ENCODE measurements at regions of chrX and their contacts with region 1.

Region 1: GRCh38 chrX:48917139-48918001 is 1.5 kb downstream of the PIM2 start:
- DNase-seq: peak; percentile 75 to 89
- ATAC-seq: peak; percentile 79
- H3K4me3 ChIP-seq: peak overlapping the region in 1 of 4 donors; percentile 68
- H3K27ac ChIP-seq: peak overlapping the region; percentile 31 to 89 (median 67)
- H3K4me1 ChIP-seq: peaks cover 0 to 4% of the 10 kb centered on the region in 2 donors
- H3K27me3 ChIP-seq: no peaks in the 10 kb centered on the region
- CTCF ChIP-seq: peak; percentile 90 to 94 (median 91)
- POLR2A ChIP-seq: no peak

Region 2: GRCh38 chrX:48676106-48676892 is 241.1 kb before region 1 on chrX:
- in situ Hi-C with region 1: no loop called
- intact Hi-C with region 1: loop called (anchors 5 kb)
- DNase-seq: peak; percentile 84 to 90
- ATAC-seq: peak; percentile 94 to 98
- H3K4me3 ChIP-seq: peak overlapping the region; percentile 67 to 77 (median 72)
- H3K27ac ChIP-seq: peak overlapping the region; percentile 86 to 95 (median 90)
- H3K4me1 ChIP-seq: no peaks in the 10 kb centered on the region
- H3K27me3 ChIP-seq: no peaks in the 10 kb centered on the region
- CTCF ChIP-seq: no peak
- POLR2A ChIP-seq: peak; percentile 53 to 68

Region 3: GRCh38 chrX:48726596-48726995 is 190.8 kb before region 1 on chrX:
- in situ Hi-C with region 1: no loop called
- intact Hi-C with region 1: no loop called
- DNase-seq: no peak
- ATAC-seq: no peak
- H3K4me3 ChIP-seq: no peak overlapping the region
- H3K27ac ChIP-seq: no peak overlapping the region
- H3K4me1 ChIP-seq: no peaks in the 10 kb centered on the region
- H3K27me3 ChIP-seq: no peaks in the 10 kb centered on the region
- CTCF ChIP-seq: no peak
- POLR2A ChIP-seq: no peak

Region 4: GRCh38 chrX:48891402-48892288 is 25.7 kb before region 1 on chrX:
- in situ Hi-C with region 1: no loop called
- intact Hi-C with region 1: loop called (anchors 1 kb)
- DNase-seq: peak; percentile 76 to 81
- ATAC-seq: peak; percentile 96 to 97
- H3K4me3 ChIP-seq: peak overlapping the region; percentile 64 to 75 (median 68)
- H3K27ac ChIP-seq: peak overlapping the region; percentile 49 to 84 (median 78)
- H3K4me1 ChIP-seq: peaks cover 5 to 8% of the 10 kb centered on the region in 2 donors
- H3K27me3 ChIP-seq: no peaks in the 10 kb centered on the region
- CTCF ChIP-seq: peak; percentile 25 to 64 (median 52)
- POLR2A ChIP-seq: peak in 1 of 2 donors; percentile 4

Region 5: GRCh38 chrX:48957827-48958634 is 40.7 kb after region 1 on chrX:
- in situ Hi-C with region 1: no loop called
- intact Hi-C with region 1: loop called (anchors 2 kb)
- DNase-seq: peak; percentile 95 to 98
- ATAC-seq: peak; percentile 86
- H3K4me3 ChIP-seq: peak overlapping the region; percentile 59 to 75 (median 66)
- H3K27ac ChIP-seq: peak overlapping the region; percentile 86 to 95 (median 94)
- H3K4me1 ChIP-seq: peaks cover 9 to 15% of the 10 kb centered on the region in 2 donors
- H3K27me3 ChIP-seq: no peaks in the 10 kb centered on the region
- CTCF ChIP-seq: no peak
- POLR2A ChIP-seq: peak; percentile 50 to 64

Region 6: GRCh38 chrX:49053223-49054072 is 136.1 kb after region 1 on chrX:
- in situ Hi-C with region 1: no loop called
- intact Hi-C with region 1: no loop called
- DNase-seq: no peak
- ATAC-seq: no peak
- H3K4me3 ChIP-seq: peak overlapping the region; percentile 56 to 64 (median 59)
- H3K27ac ChIP-seq: peak overlapping the region; percentile 43 to 73 (median 63)
- H3K4me1 ChIP-seq: no peaks in the 10 kb centered on the region
- H3K27me3 ChIP-seq: no peaks in the 10 kb centered on the region
- CTCF ChIP-seq: no peak
- POLR2A ChIP-seq: no peak

Region 7: DNA sequence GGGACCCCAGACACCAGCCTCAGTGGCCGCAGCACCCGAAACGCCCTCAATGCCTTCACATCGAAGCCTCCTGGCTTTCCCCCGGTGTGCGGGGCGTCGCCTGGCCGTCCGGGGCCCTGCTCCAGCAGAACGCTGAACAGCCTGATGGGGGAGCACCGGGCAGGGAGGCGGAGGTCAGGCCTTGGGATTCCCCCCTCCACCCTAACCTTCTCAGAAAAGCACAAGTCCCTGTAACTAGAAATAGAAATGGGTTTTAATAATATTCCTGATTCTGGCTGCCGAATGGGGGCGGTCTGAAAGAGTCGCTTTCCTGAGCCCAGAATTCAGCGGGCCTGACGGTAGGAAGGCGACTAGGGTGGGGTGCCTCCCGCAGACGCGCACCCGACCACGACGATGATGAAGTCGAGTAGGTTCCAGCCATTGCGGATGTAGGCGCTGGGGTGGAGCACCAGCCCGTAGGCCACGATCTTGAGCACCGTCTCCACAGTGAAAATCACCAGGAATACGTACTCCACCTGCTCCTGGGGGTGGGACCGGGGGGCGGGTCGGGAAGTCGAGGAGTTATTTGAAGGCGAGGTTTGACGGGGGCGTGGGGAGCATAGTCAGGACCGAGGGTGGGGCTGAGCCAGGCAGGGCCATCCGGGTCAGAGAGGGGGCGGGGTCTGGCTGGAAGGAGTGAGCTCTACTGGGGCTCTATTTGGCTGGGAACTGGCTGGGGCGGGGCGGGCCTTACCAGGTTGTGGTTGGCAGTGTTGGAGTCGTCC is 313.3 kb after region 1 on chrX:
- in situ Hi-C with region 1: no loop called
- intact Hi-C with region 1: no loop called
- DNase-seq: peak; percentile 16 to 22
- ATAC-seq: no peak
- H3K4me3 ChIP-seq: peak overlapping the region in 3 of 4 donors; percentile 33 to 40 (median 39)
- H3K27ac ChIP-seq: no peak overlapping the region
- H3K4me1 ChIP-seq: no peaks in the 10 kb centered on the region
- H3K27me3 ChIP-seq: peaks cover 0 to 3% (median 0%) of the 10 kb centered on the region in 3 donors
- CTCF ChIP-seq: no peak
- POLR2A ChIP-seq: no peak